Activated CD4-positive, alpha-beta T cell treated with anti-CD3 and anti-CD28 coated beads for 36 hours (primary cell): ENCODE measurements at regions of chr18 and their contacts with region 1.

Region 1: GRCh38 chr18:3771121-3771971 is 321.4 kb downstream of the TGIF1 start:
- DNase-seq: peak; percentile 92
- ATAC-seq: peak; percentile 99
- H3K4me3 Mint-ChIP-seq: peak overlapping the region; percentile 31
- H3K27ac Mint-ChIP-seq: peak overlapping the region; percentile 28
- H3K4me1 Mint-ChIP-seq: peaks cover 4% of the 10 kb centered on the region
- H3K27me3 Mint-ChIP-seq: peaks cover 16% of the 10 kb centered on the region

Region 2: GRCh38 chr18:3623769-3624545 is 147.4 kb before region 1 on chr18:
- CTCF ChIA-PET with region 1: no interaction called
- POLR2A ChIA-PET with region 1: no interaction called
- intact Hi-C with region 1: loop called in 1 of 2 experiments (anchors 1 kb)
- DNase-seq: peak; percentile 68
- ATAC-seq: peak; percentile 50
- H3K4me3 Mint-ChIP-seq: peak overlapping the region; percentile 42
- H3K27ac Mint-ChIP-seq: peak overlapping the region; percentile 91
- H3K4me1 Mint-ChIP-seq: peaks cover 39% of the 10 kb centered on the region
- H3K27me3 Mint-ChIP-seq: no peaks in the 10 kb centered on the region

Region 3: DNA sequence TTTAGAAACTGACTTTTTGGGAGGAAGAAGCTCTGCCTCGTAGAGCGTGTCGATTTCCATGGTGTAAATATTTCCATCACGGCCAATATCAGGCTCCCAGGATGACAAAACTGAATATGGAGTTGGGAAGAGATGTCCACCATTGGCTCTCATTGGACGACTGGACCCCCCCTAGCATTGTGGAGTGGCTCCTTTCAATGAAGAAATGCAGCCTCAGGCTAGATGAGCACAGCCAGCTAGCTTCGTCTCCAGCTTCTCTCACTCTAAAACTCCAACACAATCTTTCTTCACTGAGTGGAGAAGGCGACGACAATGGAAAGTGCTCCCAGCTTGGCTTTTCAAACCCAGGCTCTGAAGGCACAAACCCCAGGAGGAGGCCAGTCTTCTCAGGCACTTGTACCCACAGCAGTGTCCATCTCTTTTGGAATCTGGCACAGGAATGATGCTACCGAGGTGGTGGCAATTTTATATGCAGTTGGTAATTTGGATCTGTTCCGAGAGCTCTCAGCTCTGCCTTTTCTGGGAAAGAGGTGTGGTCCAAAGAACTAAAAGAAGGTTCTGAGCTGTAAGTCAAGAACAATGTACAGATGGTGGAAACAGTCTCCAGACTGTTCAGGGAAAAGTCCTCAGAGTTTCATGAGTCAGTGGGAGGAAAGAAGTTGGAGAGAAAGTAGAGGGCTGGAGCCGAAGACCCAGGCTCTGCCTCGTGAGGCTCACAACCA is 31.8 kb after region 1 on chr18:
- CTCF ChIA-PET with region 1: interaction called, 12 read pairs
- POLR2A ChIA-PET with region 1: no interaction called
- intact Hi-C with region 1: no loop called
- DNase-seq: no peak
- ATAC-seq: no peak
- H3K4me3 Mint-ChIP-seq: no peak overlapping the region
- H3K27ac Mint-ChIP-seq: no peak overlapping the region
- H3K4me1 Mint-ChIP-seq: no peaks in the 10 kb centered on the region
- H3K27me3 Mint-ChIP-seq: peaks cover 1% of the 10 kb centered on the region

Region 4: GRCh38 chr18:3966985-3967856 is 195.9 kb after region 1 on chr18:
- CTCF ChIA-PET with region 1: interaction called, 12 read pairs
- POLR2A ChIA-PET with region 1: no interaction called
- intact Hi-C with region 1: no loop called
- DNase-seq: no peak
- ATAC-seq: no peak
- H3K4me3 Mint-ChIP-seq: no peak overlapping the region
- H3K27ac Mint-ChIP-seq: no peak overlapping the region
- H3K4me1 Mint-ChIP-seq: no peaks in the 10 kb centered on the region
- H3K27me3 Mint-ChIP-seq: peaks cover 6% of the 10 kb centered on the region

Region 5: GRCh38 chr18:4068552-4069158 is 297.3 kb after region 1 on chr18:
- CTCF ChIA-PET with region 1: interaction called, 14 read pairs
- POLR2A ChIA-PET with region 1: no interaction called
- intact Hi-C with region 1: loop called (anchors 1 kb)
- DNase-seq: peak; percentile 49
- ATAC-seq: peak; percentile 58
- H3K4me3 Mint-ChIP-seq: no peak overlapping the region
- H3K27ac Mint-ChIP-seq: no peak overlapping the region
- H3K4me1 Mint-ChIP-seq: no peaks in the 10 kb centered on the region
- H3K27me3 Mint-ChIP-seq: peaks cover 12% of the 10 kb centered on the region